CD8-positive, alpha-beta memory T cell (primary cell): ENCODE measurements at regions of chr12 and their contacts with region 1.

Region 1: GRCh38 chr12:109858764-109859163 is 21.6 kb downstream of the GLTP start:
- DNase-seq: no peak
- H3K4me3 ChIP-seq: no peak overlapping the region
- H3K4me3 Mint-ChIP-seq: no peak overlapping the region
- H3K27ac ChIP-seq: no peak overlapping the region
- H3K27ac Mint-ChIP-seq: peak overlapping the region in 5 of 8 donors; percentile 37 to 94 (median 79)
- H3K4me1 ChIP-seq: peaks cover 3% of the 10 kb centered on the region
- H3K4me1 Mint-ChIP-seq: peaks cover 13 to 20% (median 15%) of the 10 kb centered on the region in 3 donors
- H3K27me3 ChIP-seq: no peaks in the 10 kb centered on the region
- H3K27me3 Mint-ChIP-seq: peaks cover 0 to 2% of the 10 kb centered on the region in 2 donors

Region 2: GRCh38 chr12:109775172-109775881 is 83.4 kb before region 1 on chr12:
- CTCF ChIA-PET with region 1: no interaction called
- POLR2A ChIA-PET with region 1: no interaction called
- DNase-seq: peak; percentile 49 to 78 (median 63)
- H3K4me3 ChIP-seq: no peak overlapping the region
- H3K4me3 Mint-ChIP-seq: peak overlapping the region in 1 of 7 donors; percentile 44
- H3K27ac ChIP-seq: no peak overlapping the region
- H3K27ac Mint-ChIP-seq: peak overlapping the region in 1 of 8 donors; percentile 54
- H3K4me1 ChIP-seq: no peaks in the 10 kb centered on the region
- H3K4me1 Mint-ChIP-seq: peaks cover 6 to 16% (median 6%) of the 10 kb centered on the region in 3 donors
- H3K27me3 ChIP-seq: no peaks in the 10 kb centered on the region
- H3K27me3 Mint-ChIP-seq: peaks cover 4 to 11% of the 10 kb centered on the region in 2 donors

Region 3: GRCh38 chr12:109873670-109874069 is 14.9 kb after region 1 on chr12:
- CTCF ChIA-PET with region 1: interaction called, 5 read pairs
- POLR2A ChIA-PET with region 1: interaction called, 12 read pairs
- DNase-seq: no peak
- H3K4me3 ChIP-seq: no peak overlapping the region
- H3K4me3 Mint-ChIP-seq: no peak overlapping the region
- H3K27ac ChIP-seq: no peak overlapping the region
- H3K27ac Mint-ChIP-seq: peak overlapping the region in 1 of 8 donors; percentile 23
- H3K4me1 ChIP-seq: peaks cover 10% of the 10 kb centered on the region
- H3K4me1 Mint-ChIP-seq: peaks cover 39 to 61% (median 55%) of the 10 kb centered on the region in 3 donors
- H3K27me3 ChIP-seq: no peaks in the 10 kb centered on the region
- H3K27me3 Mint-ChIP-seq: no peaks in the 10 kb centered on the region

Region 4: DNA sequence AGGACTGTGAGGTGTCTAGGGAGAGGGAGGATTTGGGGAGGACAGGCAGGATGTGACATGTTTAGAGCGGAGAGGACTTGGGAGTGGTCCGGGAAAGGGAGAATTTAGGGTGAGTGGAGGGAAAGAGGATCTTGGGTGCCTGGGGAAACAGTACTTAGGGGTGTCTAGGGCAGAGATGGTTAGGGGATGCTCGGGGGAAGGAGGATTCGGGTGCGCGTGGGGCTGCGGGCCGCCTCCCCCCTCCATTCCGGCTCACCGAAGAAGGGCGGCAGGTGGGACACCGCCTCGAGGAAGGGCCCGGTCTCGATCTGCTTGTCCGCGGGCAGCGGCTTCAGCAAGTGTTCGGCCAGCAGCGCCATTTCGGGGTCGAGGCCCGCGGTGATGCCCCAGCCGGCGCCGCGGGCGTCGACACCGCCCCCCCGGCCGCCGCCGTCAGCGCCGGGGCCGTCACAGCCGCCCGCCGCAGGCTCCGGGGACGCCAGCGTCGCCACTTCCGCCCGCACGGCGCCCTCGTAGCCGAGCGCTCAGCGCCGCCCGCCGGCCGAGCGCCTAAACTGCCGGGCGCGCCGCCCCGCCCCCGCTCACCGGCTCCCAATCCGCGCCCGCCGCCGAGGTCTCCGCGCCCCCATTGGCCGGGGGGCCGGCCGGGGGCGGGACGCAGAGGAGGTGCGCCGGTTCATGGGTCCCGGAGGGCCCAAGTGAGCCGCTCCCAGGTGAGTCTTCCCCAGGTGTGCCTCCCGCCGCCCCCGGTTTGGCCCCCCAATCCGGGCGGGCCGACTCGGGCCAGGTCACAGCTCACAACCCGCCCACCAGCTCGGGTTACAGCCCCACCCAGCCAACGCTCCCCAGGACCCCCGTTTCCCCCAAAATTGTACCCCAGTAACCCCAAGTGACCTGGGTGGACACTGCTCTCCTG is 21.5 kb after region 1 on chr12 and contains the start of gene GLTP:
- CTCF ChIA-PET with region 1: interaction called, 10 read pairs
- POLR2A ChIA-PET with region 1: no interaction called
- DNase-seq: peak; percentile 86 to 94 (median 91)
- H3K4me3 ChIP-seq: peak within 1 kb of the TSS; percentile 98
- H3K4me3 Mint-ChIP-seq: peak within 1 kb of the TSS; percentile 93 to 98 (median 96)
- H3K27ac ChIP-seq: peak within 1 kb of the TSS; percentile 85
- H3K27ac Mint-ChIP-seq: peak within 1 kb of the TSS; percentile 53 to 100 (median 98)
- H3K4me1 ChIP-seq: peaks cover 30% of the 10 kb centered on the region
- H3K4me1 Mint-ChIP-seq: peaks cover 43 to 54% (median 54%) of the 10 kb centered on the region in 3 donors
- H3K27me3 ChIP-seq: no peaks in the 10 kb centered on the region
- H3K27me3 Mint-ChIP-seq: peaks cover 0 to 2% of the 10 kb centered on the region in 2 donors
- total RNA-seq, gene GLTP: 39.3 to 42.7 TPM